ENCODE measurements at regions of chr12 and their contacts with region 1.

Region 1: DNA sequence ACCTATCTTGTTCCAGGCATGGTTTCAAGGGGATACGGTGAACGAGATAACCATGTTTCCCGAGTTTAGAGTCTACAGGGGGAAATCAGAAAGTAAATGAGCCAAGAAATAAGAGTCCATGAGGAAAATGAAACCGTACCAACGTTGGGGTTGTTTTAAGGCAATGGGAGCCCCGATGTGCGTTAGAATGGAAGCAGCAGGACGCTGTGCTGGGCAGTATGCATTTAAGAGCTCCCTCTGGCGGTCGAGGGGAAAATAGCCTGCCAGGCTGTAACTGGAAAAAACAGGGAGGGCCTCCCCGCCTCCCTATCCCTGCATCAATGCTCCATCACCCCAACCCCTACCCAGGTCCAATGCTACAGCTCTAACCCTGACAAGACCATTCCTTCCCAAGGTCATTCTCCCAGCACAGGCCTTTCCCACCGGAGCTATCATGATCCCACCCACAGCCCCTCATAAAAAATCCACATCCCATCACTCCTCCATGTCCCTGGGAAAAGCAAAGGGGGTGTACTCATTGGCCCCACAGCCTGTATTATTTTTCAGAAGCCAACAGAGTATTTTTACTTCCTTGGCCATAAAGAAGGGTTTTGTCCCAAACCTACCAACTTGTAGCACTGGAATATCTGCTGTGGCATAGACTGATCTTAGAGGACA is 226.3 kb upstream of the NOS1 start:
- DNase-seq: no peak

Region 2: DNA sequence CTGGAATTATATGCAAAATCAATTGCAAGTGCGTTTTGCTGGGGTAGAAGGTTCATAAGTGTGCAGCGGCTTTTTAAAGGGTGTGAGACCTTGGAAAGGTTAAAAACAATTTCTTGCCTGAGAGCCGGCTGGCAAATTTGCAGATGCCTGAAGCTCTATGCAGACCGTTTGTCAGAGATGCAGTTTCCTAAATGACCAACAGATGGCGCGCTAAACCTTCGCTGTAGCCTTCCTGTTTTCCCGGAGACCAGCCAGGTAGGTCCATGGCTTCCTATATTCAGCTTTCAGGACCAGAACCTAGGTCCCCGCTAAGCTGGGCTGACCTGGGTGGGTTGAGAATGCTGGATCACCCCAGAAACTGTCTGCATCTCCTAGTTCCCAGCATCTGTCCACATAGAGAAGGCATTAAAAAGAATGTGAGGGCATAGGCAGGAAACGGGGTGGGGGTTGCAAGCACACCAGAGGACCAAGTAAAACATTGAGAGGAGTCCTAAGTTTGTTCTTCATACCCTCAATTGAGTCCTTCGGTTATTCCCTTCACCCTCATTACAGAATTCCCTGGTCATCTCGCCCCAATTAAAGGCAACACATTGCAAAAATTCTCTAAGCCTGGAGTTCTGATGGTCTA is 220.6 kb before region 1 on chr12:
- intact Hi-C with region 1: loop called (anchors 5 kb)
- DNase-seq: peak; percentile 85

Region 3: DNA sequence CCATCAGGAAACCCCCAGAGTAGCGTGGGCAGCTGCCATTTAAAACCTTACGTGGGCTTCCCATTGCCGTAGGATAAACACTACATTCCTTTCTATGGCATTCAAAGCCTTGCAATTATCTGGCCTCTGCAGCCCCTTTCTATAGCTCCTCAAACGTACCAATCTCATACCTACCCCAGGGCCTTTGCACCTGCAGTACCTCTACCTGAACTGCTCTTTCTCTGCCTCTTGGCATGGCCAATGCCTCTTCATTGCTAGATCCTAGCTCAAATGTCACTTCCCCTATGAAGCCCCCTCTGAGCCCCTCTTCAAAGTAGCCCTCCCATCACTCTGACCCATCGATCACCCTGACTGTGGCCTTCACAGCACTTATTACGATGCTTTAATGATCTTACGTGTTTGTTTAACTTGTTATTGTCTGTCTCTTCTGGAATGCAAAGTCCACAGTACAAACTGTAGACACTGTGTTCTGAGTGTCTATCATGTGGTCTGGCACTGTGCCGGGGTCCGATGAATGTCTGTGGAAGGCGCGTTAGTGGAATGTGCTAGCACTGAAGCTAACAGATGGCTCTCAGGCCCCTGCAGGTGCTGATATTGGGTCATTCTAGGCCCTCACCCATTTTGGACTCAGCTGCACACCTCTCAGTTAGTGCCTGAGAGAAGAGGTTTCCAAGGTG is 69.0 kb before region 1 on chr12:
- intact Hi-C with region 1: no loop called
- DNase-seq: no peak

Region 4: GRCh38 chr12:117552971-117553370 is 34.8 kb before region 1 on chr12:
- intact Hi-C with region 1: no loop called
- DNase-seq: no peak

Measured in posterior vena cava (tissue), 2 donors.